Ovary (tissue), 10 donors: ENCODE measurements at regions of chr6 and their contacts with region 1.

Region 1: GRCh38 chr6:169487579-169488436 is 214.0 kb downstream of the WDR27 start:
- DNase-seq: peak in 2 of 5 donors; percentile 26 to 47
- H3K4me3 ChIP-seq: no peak overlapping the region
- H3K27ac ChIP-seq: no peak overlapping the region
- H3K4me1 ChIP-seq: peaks cover 5% of the 10 kb centered on the region
- H3K27me3 ChIP-seq: no peaks in the 10 kb centered on the region
- CTCF ChIP-seq: peak; percentile 20 to 49 (median 49)
- EP300 ChIP-seq: no peak
- POLR2A ChIP-seq: no peak

Region 2: GRCh38 chr6:168908887-168909286 is 578.9 kb before region 1 on chr6:
- intact Hi-C with region 1: loop called in 1 of 4 experiments (anchors 10 kb)
- DNase-seq: no peak
- H3K4me3 ChIP-seq: no peak overlapping the region
- H3K27ac ChIP-seq: no peak overlapping the region
- H3K4me1 ChIP-seq: peaks cover 1% of the 10 kb centered on the region
- H3K27me3 ChIP-seq: no peaks in the 10 kb centered on the region
- CTCF ChIP-seq: peak; percentile 11 to 49 (median 38)
- EP300 ChIP-seq: no peak
- POLR2A ChIP-seq: no peak

Region 3: GRCh38 chr6:168956884-168957730 is 530.7 kb before region 1 on chr6:
- intact Hi-C with region 1: loop called in 1 of 4 experiments (anchors 5 kb)
- DNase-seq: peak; percentile 67 to 81 (median 78)
- H3K4me3 ChIP-seq: no peak overlapping the region
- H3K27ac ChIP-seq: no peak overlapping the region
- H3K4me1 ChIP-seq: peaks cover 2% of the 10 kb centered on the region
- H3K27me3 ChIP-seq: no peaks in the 10 kb centered on the region
- CTCF ChIP-seq: peak; percentile 56 to 76 (median 69)
- EP300 ChIP-seq: no peak
- POLR2A ChIP-seq: no peak

Region 4: GRCh38 chr6:169654598-169655391 is 167.0 kb after region 1 on chr6:
- intact Hi-C with region 1: no loop called
- DNase-seq: peak in 4 of 5 donors; percentile 72 to 86 (median 78)
- H3K4me3 ChIP-seq: peak overlapping the region; percentile 46
- H3K27ac ChIP-seq: peak overlapping the region in 1 of 2 donors; percentile 54
- H3K4me1 ChIP-seq: peaks cover 3% of the 10 kb centered on the region
- H3K27me3 ChIP-seq: no peaks in the 10 kb centered on the region
- CTCF ChIP-seq: peak in 2 of 3 donors; percentile 24 to 35
- EP300 ChIP-seq: no peak
- POLR2A ChIP-seq: peak; percentile 20